CD4-positive, alpha-beta T cell (primary cell): ENCODE measurements at regions of chr17 and their contacts with region 1.

Region 1: GRCh38 chr17:36486204-36487194 is at the start of gene ZNHIT3:
- DNase-seq: peak; percentile 81 to 96 (median 86)
- ATAC-seq: peak; percentile 95
- H3K4me3 ChIP-seq: peak within 1 kb of the TSS; percentile 99
- H3K4me3 Mint-ChIP-seq: peak within 1 kb of the TSS; percentile 99
- H3K27ac ChIP-seq: peak within 1 kb of the TSS; percentile 41 to 60
- H3K27ac Mint-ChIP-seq: peak within 1 kb of the TSS; percentile 88
- H3K4me1 ChIP-seq: peaks cover 52% of the 10 kb centered on the region
- H3K4me1 Mint-ChIP-seq: peaks cover 44% of the 10 kb centered on the region
- H3K27me3 ChIP-seq: peaks cover 8 to 10% of the 10 kb centered on the region in 2 experiments
- H3K27me3 Mint-ChIP-seq: peaks cover 10% of the 10 kb centered on the region
- CTCF ChIP-seq: no peak
- total RNA-seq, gene ZNHIT3: 70.2 to 73.9 TPM

Region 2: GRCh38 chr17:35969558-35970380 is 516.7 kb before region 1 on chr17:
- CTCF ChIA-PET with region 1: interaction called, 4 read pairs
- POLR2A ChIA-PET with region 1: no interaction called
- intact Hi-C with region 1: loop called in 1 of 2 experiments (anchors 2 kb)
- DNase-seq: peak; percentile 26 to 80 (median 56)
- ATAC-seq: no peak
- H3K4me3 ChIP-seq: no peak overlapping the region
- H3K4me3 Mint-ChIP-seq: no peak overlapping the region
- H3K27ac ChIP-seq: no peak overlapping the region
- H3K27ac Mint-ChIP-seq: no peak overlapping the region
- H3K4me1 ChIP-seq: peaks cover 3% of the 10 kb centered on the region
- H3K4me1 Mint-ChIP-seq: no peaks in the 10 kb centered on the region
- H3K27me3 ChIP-seq: no peaks in the 10 kb centered on the region
- H3K27me3 Mint-ChIP-seq: peaks cover 6% of the 10 kb centered on the region
- CTCF ChIP-seq: peak; percentile 72

Region 3: DNA sequence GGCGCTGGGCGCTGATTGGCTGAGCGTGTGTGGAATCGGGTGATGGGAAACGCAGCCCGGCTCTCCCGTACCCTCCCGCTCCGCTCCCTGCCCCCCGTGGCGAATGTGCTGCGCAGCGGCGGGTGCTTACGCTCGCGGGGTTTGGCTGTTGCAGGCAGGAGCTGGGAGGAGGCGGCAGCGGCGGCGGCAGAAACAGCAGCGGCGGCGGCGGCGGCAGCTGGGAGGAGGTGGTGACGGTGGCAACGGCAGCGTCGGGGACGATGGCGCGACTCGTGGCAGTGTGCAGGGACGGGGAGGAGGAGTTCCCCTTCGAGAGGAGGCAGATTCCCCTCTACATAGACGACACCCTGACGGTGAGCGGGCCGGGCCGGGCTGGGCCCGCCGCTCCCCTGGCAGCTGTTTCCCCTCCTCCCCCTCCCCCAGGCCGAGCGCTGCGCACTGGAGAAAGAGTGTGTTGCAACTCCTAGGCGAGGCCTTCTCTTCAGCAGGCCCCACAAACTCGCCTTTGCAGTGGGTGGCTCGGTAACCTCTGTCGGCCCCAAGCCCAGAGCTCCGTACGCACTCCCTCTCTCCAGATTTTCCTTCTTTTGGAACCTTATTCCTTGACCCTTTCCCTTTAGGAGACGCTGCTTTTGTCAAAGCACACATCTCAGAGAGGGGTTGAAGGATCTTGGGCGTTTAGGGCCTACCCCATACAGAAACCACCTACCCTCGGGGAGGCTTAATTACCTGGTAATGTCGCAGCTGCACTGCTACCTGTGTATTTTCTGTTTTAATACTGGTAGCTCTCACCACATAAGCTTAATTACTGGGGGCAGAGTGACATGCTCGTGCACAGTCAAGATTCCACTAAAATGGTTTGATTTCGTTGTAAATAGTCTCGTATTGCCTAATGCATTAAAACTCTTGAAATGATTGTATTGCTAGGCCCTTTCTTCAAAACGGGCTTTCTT is 59.2 kb after region 1 on chr17:
- CTCF ChIA-PET with region 1: interaction called, 11 read pairs
- POLR2A ChIA-PET with region 1: interaction called, 23 read pairs
- intact Hi-C with region 1: loop called in 1 of 2 experiments (anchors 2 kb)
- DNase-seq: peak; percentile 92 to 99 (median 96)
- ATAC-seq: peak; percentile 80
- H3K4me3 ChIP-seq: peak overlapping the region; percentile 99
- H3K4me3 Mint-ChIP-seq: peak overlapping the region; percentile 97
- H3K27ac ChIP-seq: peak overlapping the region; percentile 72 to 99
- H3K27ac Mint-ChIP-seq: peak overlapping the region; percentile 97
- H3K4me1 ChIP-seq: peaks cover 39% of the 10 kb centered on the region
- H3K4me1 Mint-ChIP-seq: peaks cover 53% of the 10 kb centered on the region
- H3K27me3 ChIP-seq: no peaks in the 10 kb centered on the region
- H3K27me3 Mint-ChIP-seq: no peaks in the 10 kb centered on the region
- CTCF ChIP-seq: no peak

Region 4: GRCh38 chr17:36722121-36722902 is 235.8 kb after region 1 on chr17:
- CTCF ChIA-PET with region 1: no interaction called
- POLR2A ChIA-PET with region 1: interaction called, 3 read pairs
- intact Hi-C with region 1: loop called in 1 of 2 experiments (anchors 5 kb)
- DNase-seq: peak; percentile 62 to 89 (median 80)
- ATAC-seq: peak; percentile 97
- H3K4me3 ChIP-seq: peak overlapping the region; percentile 63
- H3K4me3 Mint-ChIP-seq: peak overlapping the region; percentile 87
- H3K27ac ChIP-seq: peak overlapping the region; percentile 73 to 75
- H3K27ac Mint-ChIP-seq: peak overlapping the region; percentile 97
- H3K4me1 ChIP-seq: peaks cover 44% of the 10 kb centered on the region
- H3K4me1 Mint-ChIP-seq: peaks cover 66% of the 10 kb centered on the region
- H3K27me3 ChIP-seq: no peaks in the 10 kb centered on the region
- H3K27me3 Mint-ChIP-seq: no peaks in the 10 kb centered on the region
- CTCF ChIP-seq: no peak

Region 5: DNA sequence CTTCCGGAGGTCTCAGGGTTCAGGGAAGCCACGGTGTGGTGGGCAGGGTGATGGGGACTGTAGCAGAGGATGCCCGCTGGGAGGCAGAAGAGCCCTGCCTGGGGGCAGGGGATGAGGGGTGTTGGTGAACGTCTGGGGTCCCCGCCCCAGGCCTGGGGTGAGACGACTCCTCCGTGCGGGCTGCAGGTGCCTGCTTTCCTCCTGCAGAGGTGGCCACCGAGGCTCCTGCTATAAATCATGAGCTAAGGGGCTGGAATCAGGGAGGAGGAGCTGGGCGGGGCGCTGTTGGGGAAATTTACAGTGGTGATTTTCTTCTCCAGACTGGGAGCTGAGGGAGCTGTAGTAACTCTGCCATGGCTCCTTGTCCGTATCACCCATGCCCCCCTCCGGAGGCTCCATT is 281.9 kb after region 1 on chr17:
- CTCF ChIA-PET with region 1: no interaction called
- POLR2A ChIA-PET with region 1: no interaction called
- intact Hi-C with region 1: no loop called
- DNase-seq: no peak
- ATAC-seq: no peak
- H3K4me3 ChIP-seq: no peak overlapping the region
- H3K4me3 Mint-ChIP-seq: no peak overlapping the region
- H3K27ac ChIP-seq: no peak overlapping the region
- H3K27ac Mint-ChIP-seq: no peak overlapping the region
- H3K4me1 ChIP-seq: peaks cover 6% of the 10 kb centered on the region
- H3K4me1 Mint-ChIP-seq: peaks cover 4% of the 10 kb centered on the region
- H3K27me3 ChIP-seq: no peaks in the 10 kb centered on the region
- H3K27me3 Mint-ChIP-seq: peaks cover 11% of the 10 kb centered on the region
- CTCF ChIP-seq: no peak

Region 6: DNA sequence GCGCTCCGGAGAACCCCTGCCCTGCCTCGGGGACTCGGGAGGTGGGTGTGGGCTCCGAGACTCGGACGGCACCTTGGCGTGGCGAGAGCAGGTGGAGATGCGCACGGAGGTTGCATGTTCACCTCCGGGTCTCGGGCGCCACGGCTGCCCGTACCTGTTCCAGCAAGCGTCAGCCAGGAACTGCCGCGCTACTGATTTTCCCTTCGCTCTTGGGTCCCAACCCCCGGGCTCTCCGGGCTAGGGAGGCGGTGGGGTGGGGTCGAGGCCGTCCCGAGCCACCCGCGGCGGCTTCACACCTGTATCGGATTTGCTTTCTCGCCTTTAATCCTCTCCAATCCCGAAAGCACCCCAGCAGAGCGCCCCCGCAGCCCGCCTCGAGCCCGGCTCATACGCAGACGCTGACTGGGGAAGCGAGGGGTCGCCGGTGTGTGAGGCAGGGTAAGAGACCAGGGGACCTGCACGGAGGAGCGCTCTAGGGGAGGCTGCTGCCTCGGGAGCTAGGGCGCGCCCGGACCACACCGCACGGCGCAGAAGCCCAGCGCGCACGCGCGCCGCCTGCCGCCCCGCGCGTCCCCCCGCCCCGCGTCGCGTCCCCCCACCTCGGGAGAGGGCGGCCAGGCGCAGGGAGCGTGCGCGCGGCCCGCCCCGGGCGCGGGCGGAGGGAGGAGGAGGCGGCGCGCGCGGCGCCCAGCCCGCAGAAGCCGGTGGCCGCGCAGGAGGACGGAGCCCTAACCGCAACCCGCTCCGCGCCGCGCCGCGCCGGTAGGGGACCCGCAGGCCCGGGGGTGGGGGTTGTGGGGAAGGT is 1002.9 kb after region 1 on chr17 and contains the start of gene DUSP14:
- CTCF ChIA-PET with region 1: no interaction called
- POLR2A ChIA-PET with region 1: no interaction called
- intact Hi-C with region 1: loop called in 1 of 2 experiments (anchors 10 kb)
- DNase-seq: peak; percentile 69 to 94 (median 83)
- ATAC-seq: peak; percentile 78
- H3K4me3 ChIP-seq: peak within 1 kb of the TSS; percentile 96
- H3K4me3 Mint-ChIP-seq: peak within 1 kb of the TSS; percentile 98
- H3K27ac ChIP-seq: peak within 1 kb of the TSS; percentile 59 to 64
- H3K27ac Mint-ChIP-seq: peak within 1 kb of the TSS; percentile 91
- H3K4me1 ChIP-seq: peaks cover 29% of the 10 kb centered on the region
- H3K4me1 Mint-ChIP-seq: peaks cover 30% of the 10 kb centered on the region
- H3K27me3 ChIP-seq: no peaks in the 10 kb centered on the region
- H3K27me3 Mint-ChIP-seq: no peaks in the 10 kb centered on the region
- CTCF ChIP-seq: no peak
- total RNA-seq, gene DUSP14: 4.4 to 4.9 TPM